Right cardiac atrium (tissue), 5 donors: ENCODE measurements at regions of chr2 and their contacts with region 1.

Region 1: DNA sequence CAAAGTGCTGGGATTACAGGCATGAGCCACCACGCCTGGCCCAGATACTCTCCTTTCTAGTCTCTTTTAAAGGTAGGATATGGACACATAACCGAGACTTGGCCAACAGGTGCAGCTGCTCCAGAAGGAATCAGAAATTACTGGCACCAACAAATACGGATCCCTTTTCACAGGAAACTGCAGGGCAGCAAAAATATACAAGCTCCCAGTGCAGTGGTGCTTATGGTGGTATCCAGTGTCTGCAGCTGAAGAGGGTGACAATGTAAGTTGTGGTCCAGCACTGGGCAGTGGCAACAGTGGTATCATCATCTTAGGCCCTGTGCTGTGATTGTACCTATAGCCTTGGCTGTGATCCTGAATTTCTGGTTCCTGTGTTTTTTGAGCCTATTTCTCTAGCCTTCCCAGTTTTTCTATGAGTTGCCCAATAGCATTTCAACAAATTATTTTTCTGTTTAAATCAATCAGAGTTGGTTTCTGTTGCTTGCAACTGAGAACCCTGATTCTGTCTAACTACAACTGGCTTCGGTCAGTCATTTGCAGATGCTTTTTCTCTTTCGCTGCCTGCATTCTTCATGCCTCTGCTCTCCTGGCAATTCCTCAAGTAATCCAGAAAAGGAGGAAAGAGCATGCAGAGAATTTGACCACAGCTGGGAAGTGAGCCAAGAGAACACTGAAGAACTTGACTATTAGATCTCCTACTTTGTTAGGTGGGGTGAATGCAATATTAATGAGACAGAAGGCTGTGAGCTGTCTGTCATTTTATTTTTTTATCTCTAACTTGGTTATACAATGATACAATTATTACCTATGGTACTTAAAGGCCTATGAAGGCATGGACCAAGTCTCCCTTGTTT is 30.8 kb upstream of the EML4 start:
- DNase-seq: no peak
- ATAC-seq: peak in 1 of 2 donors; percentile 34
- H3K4me3 ChIP-seq: no peak overlapping the region
- H3K27ac ChIP-seq: no peak overlapping the region
- H3K4me1 ChIP-seq: peaks cover 19% of the 10 kb centered on the region
- H3K27me3 ChIP-seq: no peaks in the 10 kb centered on the region

Region 2: GRCh38 chr2:42102024-42102590 is 36.3 kb before region 1 on chr2:
- intact Hi-C with region 1: loop called in 1 of 4 experiments (anchors 5 kb)
- DNase-seq: peak; percentile 57 to 83 (median 80)
- ATAC-seq: peak; percentile 51 to 59
- H3K4me3 ChIP-seq: peak overlapping the region; percentile 36
- H3K27ac ChIP-seq: peak overlapping the region; percentile 53
- H3K4me1 ChIP-seq: peaks cover 8% of the 10 kb centered on the region
- H3K27me3 ChIP-seq: no peaks in the 10 kb centered on the region